ENCODE measurements at regions of chr5 and their contacts with region 1.

Region 1: GRCh38 chr5:6820851-6821479 is 107.7 kb downstream of the TENT4A start:
- DNase-seq: peak; percentile 27
- ATAC-seq: peak; percentile 70
- H3K4me3 ChIP-seq: no peak overlapping the region
- H3K27ac ChIP-seq: no peak overlapping the region
- H3K4me1 ChIP-seq: no peaks in the 10 kb centered on the region
- H3K27me3 ChIP-seq: no peaks in the 10 kb centered on the region
- CTCF ChIP-seq: peak; percentile 51 to 91 (median 72); a peak in 5 of 6 replicates
- POLR2A ChIP-seq: no peak
- RAD21 ChIP-seq: peak; percentile 63

Region 2: DNA sequence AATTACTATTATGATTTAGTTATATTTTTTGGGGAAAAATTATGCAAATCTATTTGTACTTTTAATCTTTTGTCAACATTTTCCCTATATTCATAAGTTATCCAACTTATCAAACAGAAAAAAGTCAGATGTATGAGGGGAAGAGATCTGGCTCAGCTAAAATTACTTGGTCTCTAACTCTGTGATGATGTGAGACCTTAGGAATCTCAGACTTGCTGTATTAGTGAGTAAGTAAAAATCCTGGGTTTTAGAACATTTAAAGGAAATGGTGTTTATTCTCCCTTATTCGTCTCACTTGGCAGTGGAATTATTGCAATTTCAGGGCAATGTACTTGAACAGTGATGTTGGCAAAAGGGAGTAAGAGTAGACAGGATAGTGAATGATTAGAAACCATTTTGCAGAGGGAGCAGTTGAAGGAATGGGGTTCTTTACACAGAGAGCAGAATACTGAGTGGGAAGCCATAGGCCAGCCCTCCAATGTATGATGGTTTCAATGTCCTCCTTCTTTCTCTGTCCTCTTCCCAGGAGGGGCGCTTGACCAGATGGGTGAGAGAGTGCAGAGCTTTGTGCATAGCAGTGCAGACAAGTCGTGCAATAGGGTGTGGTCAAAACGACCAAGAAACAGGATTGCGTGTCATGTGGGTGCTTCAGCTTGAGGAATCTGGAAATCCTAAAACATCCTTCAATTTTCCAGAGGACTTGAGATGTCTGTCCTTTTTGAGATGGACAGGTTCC is 16.0 kb before region 1 on chr5:
- CTCF ChIA-PET with region 1: no interaction called
- POLR2A ChIA-PET with region 1: no interaction called
- RAD21 ChIA-PET with region 1: no interaction called
- intact Hi-C with region 1: no loop called
- DNase-seq: no peak
- ATAC-seq: no peak
- H3K4me3 ChIP-seq: no peak overlapping the region
- H3K27ac ChIP-seq: no peak overlapping the region
- H3K4me1 ChIP-seq: no peaks in the 10 kb centered on the region
- H3K27me3 ChIP-seq: no peaks in the 10 kb centered on the region
- CTCF ChIP-seq: no peak
- POLR2A ChIP-seq: no peak
- RAD21 ChIP-seq: no peak

Region 3: GRCh38 chr5:6950860-6951259 is 129.9 kb after region 1 on chr5:
- CTCF ChIA-PET with region 1: no interaction called
- POLR2A ChIA-PET with region 1: no interaction called
- RAD21 ChIA-PET with region 1: no interaction called
- intact Hi-C with region 1: no loop called
- DNase-seq: no peak
- ATAC-seq: no peak
- H3K4me3 ChIP-seq: no peak overlapping the region
- H3K27ac ChIP-seq: no peak overlapping the region
- H3K4me1 ChIP-seq: no peaks in the 10 kb centered on the region
- H3K27me3 ChIP-seq: no peaks in the 10 kb centered on the region
- CTCF ChIP-seq: no peak
- POLR2A ChIP-seq: no peak
- RAD21 ChIP-seq: no peak

Region 4: DNA sequence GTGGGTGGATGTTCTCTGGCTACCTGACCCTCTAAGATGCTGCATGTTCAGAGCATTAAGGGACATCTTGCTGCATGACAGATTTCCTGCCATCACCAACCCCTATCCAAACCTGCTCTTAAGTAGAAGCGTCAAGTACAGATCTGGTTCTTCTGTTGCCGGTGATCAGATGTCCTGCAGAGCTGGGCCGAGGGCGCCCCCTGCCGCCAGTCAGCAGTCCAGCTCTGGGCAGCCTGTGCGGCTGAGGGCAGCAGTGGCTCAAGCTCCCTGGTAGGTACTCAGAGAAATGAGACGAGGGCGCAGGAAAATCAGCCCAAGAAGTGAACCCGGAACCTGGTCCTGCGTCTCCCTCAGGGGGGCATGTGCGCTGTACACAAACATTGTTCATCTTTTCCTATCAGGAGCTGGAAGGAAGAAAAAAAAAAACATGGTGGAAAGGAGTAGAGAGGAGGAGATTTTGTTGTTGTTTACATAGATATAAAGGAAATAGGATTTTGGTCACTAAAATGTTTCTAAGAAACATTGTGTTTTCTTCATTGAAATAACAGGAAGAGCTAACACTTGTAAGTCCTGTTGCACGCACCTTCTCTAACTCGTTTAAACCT is 934.1 kb after region 1 on chr5:
- CTCF ChIA-PET with region 1: interaction called, 4 read pairs
- POLR2A ChIA-PET with region 1: no interaction called
- RAD21 ChIA-PET with region 1: no interaction called
- intact Hi-C with region 1: loop called (anchors 10 kb)
- DNase-seq: peak; percentile 41
- ATAC-seq: peak; percentile 100
- H3K4me3 ChIP-seq: no peak overlapping the region
- H3K27ac ChIP-seq: no peak overlapping the region
- H3K4me1 ChIP-seq: no peaks in the 10 kb centered on the region
- H3K27me3 ChIP-seq: peaks cover 2% of the 10 kb centered on the region; the same call in 1 of the 2 replicates
- CTCF ChIP-seq: peak; percentile 52 to 94 (median 90); a peak in 5 of 6 replicates
- POLR2A ChIP-seq: no peak
- RAD21 ChIP-seq: peak; percentile 75

Measured in HCT116 (cell line).